ENCODE measurements at regions of chr13 and their contacts with region 1.

Region 1: GRCh38 chr13:112689303-112690165 is at the start of gene ATP11A:
- DNase-seq: peak; percentile 95
- total RNA-seq, gene ATP11A: 96.5 TPM

Region 2: DNA sequence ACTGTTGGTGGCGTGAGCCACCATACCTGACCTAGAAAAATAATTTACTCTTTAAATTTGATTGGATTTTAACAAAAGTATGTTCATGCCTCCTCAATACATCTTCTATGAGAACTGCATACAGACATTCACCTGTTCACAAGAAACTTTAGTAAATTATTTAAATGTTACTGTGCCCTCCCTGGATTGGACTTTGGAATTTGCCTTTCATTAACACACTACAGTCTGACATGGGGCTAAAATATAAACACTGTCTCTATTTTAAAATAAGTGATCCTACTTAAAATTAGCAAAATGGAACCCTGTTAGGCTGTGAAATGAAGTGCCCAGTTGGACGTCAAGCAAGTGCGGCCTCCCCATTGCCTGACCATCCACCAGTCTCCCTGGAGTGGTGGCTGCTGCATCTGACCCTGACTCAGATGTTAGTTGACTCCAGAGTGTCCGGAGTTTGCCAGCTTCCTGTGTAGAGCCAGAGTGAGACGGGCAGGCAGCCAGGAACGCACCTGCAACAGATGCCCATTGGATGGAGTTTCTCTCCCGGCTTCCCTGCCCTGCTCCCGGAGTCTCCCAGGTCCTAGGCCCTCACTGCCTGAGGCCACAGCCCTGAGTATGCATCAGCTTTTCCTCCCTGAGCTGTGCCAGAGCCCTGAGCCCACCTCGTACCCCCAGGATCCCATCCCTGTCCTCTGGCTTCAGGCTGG is 45.6 kb before region 1 on chr13:
- intact Hi-C with region 1: loop called (anchors 5 kb)
- DNase-seq: peak; percentile 54

Region 3: GRCh38 chr13:112711528-112712265 is 22.2 kb after region 1 on chr13:
- intact Hi-C with region 1: loop called (anchors 2 kb)
- DNase-seq: peak; percentile 86

Region 4: DNA sequence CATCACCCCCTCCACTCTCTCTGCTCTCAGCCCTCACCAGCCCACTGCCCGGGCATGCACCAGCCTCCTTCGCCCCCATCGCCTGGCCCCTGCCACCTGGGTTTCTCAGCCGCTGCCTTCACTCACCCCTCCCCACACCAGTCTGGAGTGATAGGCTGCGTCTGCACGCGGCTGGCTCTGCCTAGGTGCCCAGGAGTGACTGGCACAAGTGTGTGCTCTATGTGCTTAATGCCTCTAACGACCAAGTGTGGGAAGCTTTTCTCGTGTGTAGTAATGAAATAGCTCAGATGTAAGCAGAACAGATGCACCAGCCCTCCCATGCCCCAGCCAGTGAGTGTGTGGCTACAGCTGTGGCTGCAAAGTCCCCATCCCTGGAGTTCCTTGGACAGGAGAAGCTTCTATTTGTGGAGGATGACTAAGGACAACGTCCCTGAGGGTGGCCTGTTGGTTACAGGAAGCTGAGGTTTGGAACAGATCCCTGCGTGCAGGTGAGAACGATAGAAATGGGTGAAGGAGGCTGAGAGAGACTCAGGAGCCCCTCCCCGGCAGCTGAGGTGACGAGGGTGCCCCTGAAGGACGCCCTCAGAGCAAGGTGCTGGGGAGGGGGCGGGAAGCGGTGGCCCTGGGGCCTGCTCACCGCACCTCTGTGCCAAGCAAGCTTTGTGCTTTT is 35.9 kb after region 1 on chr13:
- intact Hi-C with region 1: loop called (anchors 5 kb)
- DNase-seq: no peak

Region 5: DNA sequence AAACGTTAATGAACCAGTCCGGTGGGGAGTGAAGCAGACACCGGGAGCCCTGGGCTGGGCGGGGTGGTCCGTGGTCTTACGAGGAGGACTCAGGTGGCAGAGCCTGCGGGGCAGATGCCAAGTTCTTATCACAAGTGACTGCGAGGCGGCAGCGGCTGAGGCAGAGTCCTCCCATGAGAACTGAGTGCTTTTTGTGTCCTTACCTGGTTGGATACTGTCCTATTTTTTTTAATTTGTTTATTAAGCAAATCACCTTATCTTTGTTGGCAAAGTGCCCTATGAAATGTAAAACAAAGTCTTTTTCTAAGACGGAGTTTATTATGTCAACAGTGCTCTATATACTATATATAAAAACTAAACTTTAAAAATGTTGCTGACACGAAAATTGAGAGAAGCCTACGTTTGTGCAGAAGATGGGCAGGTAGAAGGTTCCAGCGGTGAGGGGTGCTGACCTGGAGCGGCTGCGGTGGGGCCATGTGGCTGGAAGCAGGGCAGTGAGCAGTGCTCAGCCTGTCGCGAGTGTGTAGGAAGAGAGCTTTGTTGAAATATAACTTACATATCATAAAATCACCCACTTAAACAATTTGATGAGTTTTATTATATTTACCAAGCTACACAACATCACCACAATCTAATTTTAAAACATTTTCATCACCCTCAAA is 82.5 kb after region 1 on chr13:
- intact Hi-C with region 1: loop called (anchors 5 kb)
- DNase-seq: no peak

Region 6: GRCh38 chr13:112821340-112822055 is 132.0 kb after region 1 on chr13:
- intact Hi-C with region 1: loop called (anchors 5 kb)
- DNase-seq: no peak

Region 7: GRCh38 chr13:112869202-112870050 is 179.9 kb after region 1 on chr13:
- intact Hi-C with region 1: no loop called
- DNase-seq: peak; percentile 39